CD4-positive, alpha-beta T cell (primary cell): ENCODE measurements at regions of chr6 and their contacts with region 1.

Region 1: GRCh38 chr6:86856937-86857563 is 80.3 kb upstream of the HTR1E start:
- DNase-seq: peak in 4 of 14 experiments; percentile 4 to 18 (median 14)
- ATAC-seq: no peak
- H3K4me3 ChIP-seq: no peak overlapping the region
- H3K4me3 Mint-ChIP-seq: no peak overlapping the region
- H3K27ac ChIP-seq: no peak overlapping the region
- H3K27ac Mint-ChIP-seq: no peak overlapping the region
- H3K4me1 ChIP-seq: no peaks in the 10 kb centered on the region
- H3K4me1 Mint-ChIP-seq: no peaks in the 10 kb centered on the region
- H3K27me3 ChIP-seq: no peaks in the 10 kb centered on the region
- H3K27me3 Mint-ChIP-seq: no peaks in the 10 kb centered on the region
- CTCF ChIP-seq: peak; percentile 55

Region 2: GRCh38 chr6:85756982-85757381 is 1100.1 kb before region 1 on chr6:
- CTCF ChIA-PET with region 1: no interaction called
- POLR2A ChIA-PET with region 1: no interaction called
- intact Hi-C with region 1: loop called in 1 of 2 experiments (anchors 10 kb)
- DNase-seq: no peak
- ATAC-seq: no peak
- H3K4me3 ChIP-seq: no peak overlapping the region
- H3K4me3 Mint-ChIP-seq: no peak overlapping the region
- H3K27ac ChIP-seq: no peak overlapping the region
- H3K27ac Mint-ChIP-seq: no peak overlapping the region
- H3K4me1 ChIP-seq: no peaks in the 10 kb centered on the region
- H3K4me1 Mint-ChIP-seq: no peaks in the 10 kb centered on the region
- H3K27me3 ChIP-seq: peaks cover 0 to 2% of the 10 kb centered on the region in 2 experiments
- H3K27me3 Mint-ChIP-seq: peaks cover 8% of the 10 kb centered on the region
- CTCF ChIP-seq: no peak

Region 3: DNA sequence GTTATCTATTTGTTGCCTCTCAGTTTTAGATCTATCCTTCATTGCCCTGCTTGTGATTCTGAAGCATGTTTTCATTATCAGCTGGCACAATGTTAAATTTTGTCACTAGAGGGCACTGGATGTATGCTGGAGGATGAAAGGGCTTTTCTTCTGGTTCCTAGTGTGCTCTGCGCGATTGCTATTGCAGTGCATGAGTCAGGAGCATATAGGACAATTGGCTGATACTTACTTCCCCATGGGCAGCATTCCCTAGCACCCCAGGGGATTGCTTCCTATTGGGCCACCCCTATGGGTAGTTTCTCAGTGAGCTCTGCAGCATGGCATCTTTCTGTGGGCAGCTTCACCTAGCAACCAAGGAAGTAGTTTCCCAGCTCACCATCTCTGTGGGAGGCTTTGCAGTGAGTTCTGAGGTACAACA is 934.0 kb before region 1 on chr6:
- CTCF ChIA-PET with region 1: no interaction called
- POLR2A ChIA-PET with region 1: no interaction called
- intact Hi-C with region 1: loop called in 1 of 2 experiments (anchors 5 kb)
- DNase-seq: peak in 3 of 14 experiments; percentile 6 to 13 (median 11)
- ATAC-seq: no peak
- H3K4me3 ChIP-seq: no peak overlapping the region
- H3K4me3 Mint-ChIP-seq: no peak overlapping the region
- H3K27ac ChIP-seq: no peak overlapping the region
- H3K27ac Mint-ChIP-seq: no peak overlapping the region
- H3K4me1 ChIP-seq: no peaks in the 10 kb centered on the region
- H3K4me1 Mint-ChIP-seq: no peaks in the 10 kb centered on the region
- H3K27me3 ChIP-seq: no peaks in the 10 kb centered on the region
- H3K27me3 Mint-ChIP-seq: no peaks in the 10 kb centered on the region
- CTCF ChIP-seq: no peak

Region 4: DNA sequence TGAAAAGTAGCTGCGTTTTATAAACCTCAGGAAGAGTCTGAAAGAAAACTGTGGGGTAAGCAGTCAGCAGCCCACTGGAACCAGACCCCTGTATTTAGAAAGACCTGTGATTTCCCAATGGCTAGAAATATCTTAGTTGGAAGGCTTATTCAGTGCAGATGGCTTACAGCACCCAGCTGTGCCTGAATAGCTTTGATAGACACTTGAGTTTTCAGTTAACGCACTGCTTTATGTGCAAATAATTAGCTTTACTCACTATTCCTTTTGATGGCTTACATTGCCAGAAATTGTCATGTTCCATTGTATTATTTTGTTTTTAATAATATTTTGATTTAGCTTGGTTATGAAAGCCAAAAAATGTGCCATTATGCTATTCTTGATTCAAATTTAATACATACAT is 749.1 kb before region 1 on chr6:
- CTCF ChIA-PET with region 1: no interaction called
- POLR2A ChIA-PET with region 1: no interaction called
- intact Hi-C with region 1: no loop called
- DNase-seq: no peak
- ATAC-seq: no peak
- H3K4me3 ChIP-seq: no peak overlapping the region
- H3K4me3 Mint-ChIP-seq: no peak overlapping the region
- H3K27ac ChIP-seq: no peak overlapping the region
- H3K27ac Mint-ChIP-seq: no peak overlapping the region
- H3K4me1 ChIP-seq: no peaks in the 10 kb centered on the region
- H3K4me1 Mint-ChIP-seq: no peaks in the 10 kb centered on the region
- H3K27me3 ChIP-seq: no peaks in the 10 kb centered on the region
- H3K27me3 Mint-ChIP-seq: no peaks in the 10 kb centered on the region
- CTCF ChIP-seq: no peak

Region 5: GRCh38 chr6:86192123-86192522 is 664.9 kb before region 1 on chr6:
- CTCF ChIA-PET with region 1: no interaction called
- POLR2A ChIA-PET with region 1: no interaction called
- intact Hi-C with region 1: no loop called
- DNase-seq: peak in 2 of 14 experiments; percentile 0 to 1
- ATAC-seq: no peak
- H3K4me3 ChIP-seq: no peak overlapping the region
- H3K4me3 Mint-ChIP-seq: no peak overlapping the region
- H3K27ac ChIP-seq: no peak overlapping the region
- H3K27ac Mint-ChIP-seq: no peak overlapping the region
- H3K4me1 ChIP-seq: no peaks in the 10 kb centered on the region
- H3K4me1 Mint-ChIP-seq: no peaks in the 10 kb centered on the region
- H3K27me3 ChIP-seq: no peaks in the 10 kb centered on the region
- H3K27me3 Mint-ChIP-seq: no peaks in the 10 kb centered on the region
- CTCF ChIP-seq: peak; percentile 12

Region 6: DNA sequence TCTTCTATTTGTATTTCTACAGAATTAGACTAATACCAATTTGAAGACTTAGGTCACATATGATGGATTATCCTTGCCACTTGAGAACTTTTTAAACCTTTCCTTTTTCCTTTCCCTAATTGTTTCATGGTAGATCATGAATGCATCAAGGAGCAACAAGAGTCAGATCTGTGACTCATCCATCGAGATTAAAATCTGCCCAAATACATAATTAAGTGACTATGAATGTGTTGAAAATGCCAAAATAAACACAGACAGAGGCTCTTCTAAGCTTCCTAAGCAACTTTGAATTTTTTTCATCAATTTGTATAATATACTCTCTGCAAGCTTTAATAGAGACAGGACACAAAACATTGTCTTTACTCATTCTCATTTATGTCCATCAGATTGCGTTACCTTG is 56.7 kb after region 1 on chr6:
- CTCF ChIA-PET with region 1: no interaction called
- POLR2A ChIA-PET with region 1: no interaction called
- intact Hi-C with region 1: no loop called
- DNase-seq: no peak
- ATAC-seq: no peak
- H3K4me3 ChIP-seq: no peak overlapping the region
- H3K4me3 Mint-ChIP-seq: no peak overlapping the region
- H3K27ac ChIP-seq: no peak overlapping the region
- H3K27ac Mint-ChIP-seq: no peak overlapping the region
- H3K4me1 ChIP-seq: no peaks in the 10 kb centered on the region
- H3K4me1 Mint-ChIP-seq: no peaks in the 10 kb centered on the region
- H3K27me3 ChIP-seq: no peaks in the 10 kb centered on the region
- H3K27me3 Mint-ChIP-seq: no peaks in the 10 kb centered on the region
- CTCF ChIP-seq: no peak